Common myeloid progenitor, CD34-positive (primary cell): ENCODE measurements at regions of chr1 and their contacts with region 1.

Region 1: GRCh38 chr1:59759156-59759925 is 55.4 kb upstream of the HOOK1 start:
- DNase-seq: peak; percentile 72 to 83 (median 79)
- H3K4me3 ChIP-seq: peak overlapping the region in 5 of 7 experiments; percentile 5 to 67 (median 41)
- H3K27ac ChIP-seq: no peak overlapping the region
- H3K4me1 ChIP-seq: peaks cover 0 to 7% (median 3%) of the 10 kb centered on the region in 4 experiments
- H3K27me3 ChIP-seq: no peaks in the 10 kb centered on the region

Region 2: GRCh38 chr1:59605761-59606160 is 153.6 kb before region 1 on chr1:
- CTCF ChIA-PET with region 1: no interaction called
- POLR2A ChIA-PET with region 1: no interaction called
- DNase-seq: no peak
- H3K4me3 ChIP-seq: no peak overlapping the region
- H3K27ac ChIP-seq: no peak overlapping the region
- H3K4me1 ChIP-seq: no peaks in the 10 kb centered on the region
- H3K27me3 ChIP-seq: no peaks in the 10 kb centered on the region

Region 3: DNA sequence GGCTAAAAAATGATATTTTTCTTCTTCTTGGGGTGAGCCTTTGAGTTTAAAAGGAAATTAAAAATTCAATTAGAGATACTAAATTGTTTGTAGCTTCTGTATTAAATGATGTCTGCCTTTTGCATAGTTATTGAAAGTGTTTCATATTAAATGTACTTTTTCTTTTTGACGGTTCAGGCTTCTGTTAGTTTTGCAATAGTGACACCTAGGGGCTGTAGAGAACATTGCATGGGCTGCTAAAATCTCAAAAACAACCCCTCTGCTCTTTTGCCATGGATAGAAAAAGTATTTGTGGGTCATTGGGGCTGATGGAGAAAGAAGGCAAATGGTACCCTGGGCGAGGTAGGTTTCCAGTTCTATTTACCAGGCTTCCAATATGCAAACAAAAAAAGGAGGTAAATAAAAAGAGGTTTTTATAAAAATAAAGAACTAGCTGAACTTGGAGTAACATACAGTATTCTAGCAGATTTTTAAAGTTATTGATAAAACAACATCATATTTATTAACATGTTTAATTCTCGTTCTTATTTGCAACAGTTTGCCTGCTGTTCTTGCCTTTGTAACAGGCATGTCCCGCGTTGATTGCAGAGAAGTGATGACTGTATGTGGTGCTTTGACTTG is 60.0 kb before region 1 on chr1:
- CTCF ChIA-PET with region 1: interaction called, 13 read pairs
- POLR2A ChIA-PET with region 1: no interaction called
- DNase-seq: peak; percentile 55 to 76 (median 64)
- H3K4me3 ChIP-seq: no peak overlapping the region
- H3K27ac ChIP-seq: no peak overlapping the region
- H3K4me1 ChIP-seq: peaks cover 20 to 36% (median 24%) of the 10 kb centered on the region in 4 experiments
- H3K27me3 ChIP-seq: no peaks in the 10 kb centered on the region

Region 4: DNA sequence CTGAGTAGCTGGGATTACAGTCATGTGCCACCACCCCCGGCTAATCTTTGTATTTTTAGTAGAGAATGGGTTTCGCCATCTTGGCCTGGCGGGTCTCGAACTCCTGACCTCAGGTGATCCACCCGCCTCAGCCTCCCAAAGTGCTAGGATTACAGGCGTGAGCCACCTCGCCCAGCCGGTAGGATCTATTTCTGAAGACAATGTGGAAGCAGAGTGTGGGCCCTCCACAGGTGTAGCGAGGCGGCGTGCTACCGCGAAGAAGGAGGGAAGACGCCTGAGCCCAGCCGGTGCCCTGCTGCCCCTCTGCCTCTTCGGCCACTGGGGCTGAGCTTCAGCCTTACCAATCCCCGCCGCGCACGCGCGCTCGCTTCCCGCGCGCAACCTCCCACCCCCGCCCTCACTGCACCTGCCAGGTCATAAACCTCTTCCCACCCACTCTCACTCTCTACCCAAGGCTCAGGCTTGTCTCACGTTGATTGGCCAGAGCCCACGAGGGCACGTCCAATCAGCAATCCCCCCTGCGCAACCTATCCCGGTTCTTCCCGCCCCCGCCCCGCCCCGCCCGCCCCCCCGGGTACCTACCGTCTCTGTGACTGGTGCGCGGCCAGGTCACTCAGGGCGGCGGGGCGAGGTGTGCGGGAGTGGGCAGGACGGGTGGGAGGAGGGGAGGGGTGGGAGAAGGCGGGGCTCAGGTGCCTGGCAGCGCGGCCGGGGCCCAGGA is 55.0 kb after region 1 on chr1:
- CTCF ChIA-PET with region 1: no interaction called
- POLR2A ChIA-PET with region 1: no interaction called
- DNase-seq: peak; percentile 94 to 97 (median 97)
- H3K4me3 ChIP-seq: peak overlapping the region in 6 of 7 experiments; percentile 43 to 73 (median 59)
- H3K27ac ChIP-seq: no peak overlapping the region
- H3K4me1 ChIP-seq: peaks cover 0 to 18% (median 6%) of the 10 kb centered on the region in 4 experiments
- H3K27me3 ChIP-seq: peaks cover 0 to 3% (median 0%) of the 10 kb centered on the region in 5 experiments